Naive thymus-derived CD4-positive, alpha-beta T cell (primary cell): ENCODE measurements at regions of chr16 and their contacts with region 1.

Region 1: GRCh38 chr16:74998481-74999218 is at the start of gene ZNRF1:
- DNase-seq: peak; percentile 50 to 82 (median 67)
- ATAC-seq: peak; percentile 91
- H3K4me3 ChIP-seq: peak within 1 kb of the TSS; percentile 69
- H3K4me3 Mint-ChIP-seq: peak within 1 kb of the TSS; percentile 79 to 92 (median 87)
- H3K27ac ChIP-seq: peak within 1 kb of the TSS; percentile 54
- H3K27ac Mint-ChIP-seq: peak within 1 kb of the TSS; percentile 81 to 91 (median 86)
- H3K4me1 ChIP-seq: peaks cover 5 to 9% of the 10 kb centered on the region in 2 donors
- H3K4me1 Mint-ChIP-seq: peaks cover 5 to 42% (median 17%) of the 10 kb centered on the region in 7 donors
- H3K27me3 ChIP-seq: no peaks in the 10 kb centered on the region
- H3K27me3 Mint-ChIP-seq: peaks cover 0 to 19% (median 0%) of the 10 kb centered on the region in 5 donors
- total RNA-seq, gene ZNRF1: 1.8 to 27.9 (median 2.6) TPM

Region 2: DNA sequence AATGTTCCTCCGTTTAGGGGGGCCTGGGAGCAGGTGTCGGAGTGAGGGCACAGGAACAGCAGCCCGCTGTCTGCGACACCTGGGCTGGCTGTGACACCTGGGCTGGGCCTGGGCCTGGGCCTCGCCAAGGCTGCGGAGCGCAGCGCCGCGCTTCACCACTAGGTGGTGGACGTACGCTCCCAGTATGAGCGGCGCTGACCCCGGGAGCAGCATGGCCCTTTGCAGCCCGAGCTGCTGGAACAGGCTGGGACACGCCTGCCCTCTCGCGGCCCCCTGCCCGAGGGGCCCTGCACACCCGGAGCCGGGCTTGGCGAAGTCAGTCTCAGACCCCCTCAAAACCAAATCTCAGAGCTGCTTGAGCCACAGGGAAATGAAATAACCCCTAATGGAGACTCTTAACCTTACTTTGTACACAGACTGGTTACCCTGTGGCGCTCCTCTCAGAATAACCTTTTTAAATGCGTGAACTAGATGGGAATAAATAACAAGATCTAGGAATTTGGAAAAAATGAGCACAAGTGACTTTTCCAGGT is 185.5 kb before region 1 on chr16:
- CTCF ChIA-PET with region 1: no interaction called
- POLR2A ChIA-PET with region 1: no interaction called
- intact Hi-C with region 1: loop called in 1 of 2 experiments (anchors 5 kb)
- DNase-seq: peak; percentile 26 to 79 (median 61)
- ATAC-seq: peak; percentile 99
- H3K4me3 ChIP-seq: no peak overlapping the region
- H3K4me3 Mint-ChIP-seq: peak overlapping the region in 3 of 10 donors; percentile 15 to 30 (median 21)
- H3K27ac ChIP-seq: no peak overlapping the region
- H3K27ac Mint-ChIP-seq: no peak overlapping the region
- H3K4me1 ChIP-seq: no peaks in the 10 kb centered on the region
- H3K4me1 Mint-ChIP-seq: peaks cover 0 to 5% (median 0%) of the 10 kb centered on the region in 7 donors
- H3K27me3 ChIP-seq: no peaks in the 10 kb centered on the region
- H3K27me3 Mint-ChIP-seq: peaks cover 0 to 12% (median 0%) of the 10 kb centered on the region in 5 donors

Region 3: DNA sequence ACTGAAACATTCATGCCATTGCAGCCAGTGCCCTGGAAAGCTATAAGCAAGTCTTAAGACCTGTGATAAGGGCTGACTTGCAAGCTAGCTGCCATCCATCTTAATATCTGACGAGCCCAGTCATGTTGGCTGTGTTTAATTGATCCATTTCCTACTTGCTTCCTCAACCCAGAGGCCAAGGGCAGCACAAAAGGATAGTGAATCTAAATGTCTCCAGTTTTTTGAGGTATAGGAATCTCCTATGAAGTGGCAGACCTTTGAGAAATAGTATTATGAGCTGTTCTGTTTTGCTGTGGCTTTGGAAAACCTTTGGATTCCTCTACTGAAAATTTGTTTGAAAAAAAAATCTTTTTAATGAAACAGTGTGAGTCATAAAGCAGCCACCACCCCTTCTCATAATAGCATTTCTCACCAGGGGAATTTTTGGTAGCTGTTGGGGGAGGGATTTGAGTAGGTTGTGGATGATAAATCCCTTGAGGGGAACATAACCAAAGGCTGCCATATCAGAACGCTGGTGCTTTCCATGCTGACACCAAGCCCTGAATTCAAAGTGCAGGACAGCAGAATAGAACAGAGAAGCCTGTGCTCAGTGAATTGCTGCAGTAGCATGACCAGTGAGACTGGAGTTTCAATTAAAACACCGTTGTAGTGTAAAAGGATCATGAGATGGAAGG is 13.1 kb after region 1 on chr16:
- CTCF ChIA-PET with region 1: interaction called, 4 read pairs
- POLR2A ChIA-PET with region 1: interaction called, 3 read pairs
- intact Hi-C with region 1: loop called in 1 of 2 experiments (anchors 1 kb)
- DNase-seq: peak in 2 of 9 donors; percentile 11 to 59
- ATAC-seq: peak; percentile 85
- H3K4me3 ChIP-seq: no peak overlapping the region
- H3K4me3 Mint-ChIP-seq: peak overlapping the region in 1 of 10 donors; percentile 66
- H3K27ac ChIP-seq: no peak overlapping the region
- H3K27ac Mint-ChIP-seq: peak overlapping the region in 5 of 9 donors; percentile 9 to 87 (median 26)
- H3K4me1 ChIP-seq: peaks cover 0 to 8% of the 10 kb centered on the region in 2 donors
- H3K4me1 Mint-ChIP-seq: peaks cover 7 to 46% (median 11%) of the 10 kb centered on the region in 7 donors
- H3K27me3 ChIP-seq: no peaks in the 10 kb centered on the region
- H3K27me3 Mint-ChIP-seq: no peaks in the 10 kb centered on the region

Region 4: DNA sequence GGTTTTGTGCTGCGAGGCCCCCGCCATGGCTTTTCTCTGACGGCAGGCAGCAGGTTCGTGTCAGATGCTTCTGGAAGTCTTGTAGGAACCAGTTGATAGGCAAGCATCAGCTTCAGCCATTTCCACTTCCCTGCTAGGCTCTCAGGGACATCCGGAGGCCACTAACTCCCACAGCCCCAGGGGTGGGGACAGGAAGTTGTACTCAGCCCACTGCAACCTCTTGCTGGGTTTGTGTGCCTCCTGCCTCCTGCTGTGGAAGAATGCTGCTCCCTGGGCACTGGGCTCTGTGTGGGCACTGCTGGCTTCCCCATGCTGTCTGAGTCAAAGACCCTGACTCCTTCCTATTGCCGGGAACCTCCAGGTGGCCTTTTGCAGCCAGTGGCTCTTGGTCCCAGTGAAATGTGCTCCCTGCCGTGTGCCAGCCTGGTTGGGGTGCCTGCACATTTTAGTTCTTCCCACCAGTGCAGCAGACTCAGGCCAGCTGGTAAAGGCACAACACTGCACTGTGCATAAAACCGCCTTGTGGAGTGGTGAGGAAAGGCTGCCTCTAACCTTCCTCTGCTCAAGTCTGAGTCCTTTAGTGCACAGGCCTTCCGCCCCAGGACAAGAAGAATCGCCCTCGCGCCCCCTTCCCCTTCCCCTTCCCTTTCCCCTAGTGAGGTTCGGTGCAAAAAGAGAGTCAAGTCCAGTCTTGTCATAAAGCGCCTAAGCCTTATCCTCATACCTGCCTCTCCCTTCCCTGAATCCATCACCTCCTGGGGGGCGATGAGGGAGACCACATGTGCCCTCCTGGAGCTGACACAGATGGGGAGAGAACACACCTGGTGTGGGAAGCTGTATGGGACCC is 101.3 kb after region 1 on chr16:
- CTCF ChIA-PET with region 1: no interaction called
- POLR2A ChIA-PET with region 1: no interaction called
- intact Hi-C with region 1: loop called in 1 of 2 experiments (anchors 1 kb)
- DNase-seq: peak in 5 of 9 donors; percentile 24 to 45 (median 35)
- ATAC-seq: peak; percentile 60
- H3K4me3 ChIP-seq: no peak overlapping the region
- H3K4me3 Mint-ChIP-seq: peak overlapping the region in 8 of 10 donors; percentile 33 to 72 (median 50)
- H3K27ac ChIP-seq: peak overlapping the region; percentile 50
- H3K27ac Mint-ChIP-seq: peak overlapping the region; percentile 62 to 92 (median 79)
- H3K4me1 ChIP-seq: peaks cover 29 to 33% of the 10 kb centered on the region in 2 donors
- H3K4me1 Mint-ChIP-seq: peaks cover 22 to 80% (median 37%) of the 10 kb centered on the region in 7 donors
- H3K27me3 ChIP-seq: no peaks in the 10 kb centered on the region
- H3K27me3 Mint-ChIP-seq: no peaks in the 10 kb centered on the region